Heart left ventricle (tissue), 16 donors: ENCODE measurements at regions of chr2 and their contacts with region 1.

Region 1: GRCh38 chr2:187581125-187581896 is 27.1 kb upstream of the TFPI start:
- DNase-seq: no peak
- ATAC-seq: peak in 1 of 4 donors; percentile 59
- H3K4me3 ChIP-seq: peak overlapping the region in 10 of 12 donors; percentile 9 to 54 (median 31)
- H3K27ac ChIP-seq: peak overlapping the region in 1 of 12 donors; percentile 16
- H3K4me1 ChIP-seq: peaks cover 0 to 20% (median 5%) of the 10 kb centered on the region in 12 donors
- H3K27me3 ChIP-seq: no peaks in the 10 kb centered on the region
- CTCF ChIP-seq: peak; percentile 48 to 78 (median 64)
- POLR2A ChIP-seq: no peak

Region 2: GRCh38 chr2:187499941-187500532 is 81.3 kb before region 1 on chr2:
- intact Hi-C with region 1: loop called (anchors 1 to 5 kb)
- DNase-seq: peak in 3 of 5 donors; percentile 30 to 41 (median 39)
- ATAC-seq: peak in 3 of 4 donors; percentile 39 to 77 (median 62)
- H3K4me3 ChIP-seq: no peak overlapping the region
- H3K27ac ChIP-seq: no peak overlapping the region
- H3K4me1 ChIP-seq: peaks cover 0 to 35% (median 0%) of the 10 kb centered on the region in 12 donors
- H3K27me3 ChIP-seq: no peaks in the 10 kb centered on the region
- CTCF ChIP-seq: peak; percentile 70 to 96 (median 84)
- POLR2A ChIP-seq: no peak

Region 3: DNA sequence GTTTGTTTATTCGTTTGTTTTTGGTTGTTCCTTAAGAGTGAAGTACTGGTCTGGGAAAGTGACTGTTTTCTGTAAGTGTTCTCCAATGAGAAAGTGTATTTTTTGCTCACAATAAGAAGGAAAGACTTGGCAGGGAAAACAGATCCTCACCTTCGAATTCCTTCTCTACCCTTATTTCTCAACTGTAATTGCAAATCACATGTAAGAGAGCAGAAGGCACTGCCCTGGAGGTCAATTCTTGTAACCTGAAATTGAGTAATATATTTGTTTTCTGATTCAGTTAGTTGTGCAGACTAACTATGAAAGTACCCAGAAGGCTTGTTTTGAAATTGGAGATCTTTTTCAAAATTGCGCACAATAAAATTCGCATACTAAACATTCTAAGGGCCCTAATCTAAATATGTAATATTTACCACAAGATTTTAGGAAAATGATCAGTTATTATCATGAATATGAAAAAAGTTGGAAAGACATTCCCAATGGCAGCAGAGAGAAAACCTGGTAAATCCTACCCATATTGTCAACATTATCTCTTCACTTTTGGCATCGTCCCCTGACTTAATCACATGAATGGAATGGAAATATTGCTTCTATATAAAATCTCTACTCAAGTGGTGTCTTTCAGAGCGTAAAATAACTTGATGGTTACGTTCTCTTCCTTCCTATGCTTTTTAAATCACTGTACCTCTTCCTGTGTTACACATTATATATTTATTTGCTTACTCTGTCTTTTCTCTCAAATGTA is 51.2 kb before region 1 on chr2:
- intact Hi-C with region 1: no loop called
- DNase-seq: no peak
- ATAC-seq: no peak
- H3K4me3 ChIP-seq: no peak overlapping the region
- H3K27ac ChIP-seq: no peak overlapping the region
- H3K4me1 ChIP-seq: peaks cover 0 to 28% (median 3%) of the 10 kb centered on the region in 12 donors
- H3K27me3 ChIP-seq: no peaks in the 10 kb centered on the region
- CTCF ChIP-seq: no peak
- POLR2A ChIP-seq: no peak

Region 4: DNA sequence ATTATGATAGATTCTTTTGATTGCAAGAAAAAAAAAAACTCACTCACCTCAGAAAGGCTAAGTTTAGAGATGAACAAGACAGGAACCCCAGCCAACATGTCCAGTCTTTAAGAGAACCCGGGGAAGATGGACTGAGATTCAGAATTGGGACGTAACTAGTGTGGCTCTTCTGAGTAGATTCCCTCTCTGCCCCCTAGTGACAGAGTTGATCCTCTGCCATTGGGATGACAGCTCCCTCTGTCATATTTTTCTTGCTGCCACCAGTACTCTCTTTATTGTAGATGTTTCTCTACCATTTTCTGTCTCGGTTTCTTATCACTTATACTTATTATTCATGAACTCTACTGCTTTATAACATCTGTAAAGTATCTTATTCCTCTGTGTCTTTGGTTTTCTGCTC is 788.1 kb after region 1 on chr2:
- intact Hi-C with region 1: loop called in 1 of 10 experiments (anchors 10 kb)
- DNase-seq: peak in 3 of 5 donors; percentile 26 to 31 (median 27)
- ATAC-seq: peak in 3 of 4 donors; percentile 72 to 77 (median 73)
- H3K4me3 ChIP-seq: no peak overlapping the region
- H3K27ac ChIP-seq: no peak overlapping the region
- H3K4me1 ChIP-seq: peaks cover 0 to 3% (median 0%) of the 10 kb centered on the region in 12 donors
- H3K27me3 ChIP-seq: no peaks in the 10 kb centered on the region
- CTCF ChIP-seq: peak; percentile 51 to 78 (median 69)
- POLR2A ChIP-seq: no peak

Region 5: GRCh38 chr2:188512456-188512855 is 931.1 kb after region 1 on chr2:
- intact Hi-C with region 1: loop called in 7 of 10 experiments (anchors 5 to 10 kb)
- DNase-seq: no peak
- ATAC-seq: peak in 2 of 4 donors; percentile 32 to 57
- H3K4me3 ChIP-seq: no peak overlapping the region
- H3K27ac ChIP-seq: no peak overlapping the region
- H3K4me1 ChIP-seq: peaks cover 0 to 6% (median 0%) of the 10 kb centered on the region in 12 donors
- H3K27me3 ChIP-seq: no peaks in the 10 kb centered on the region
- CTCF ChIP-seq: peak; percentile 11 to 70 (median 52)
- POLR2A ChIP-seq: no peak